Activated CD8-positive, alpha-beta T cell treated with anti-CD3 and anti-CD28 coated beads, Interleukin-2, amount 10 ng/mL, durations not matched to agents 7 days and 5 days (primary cell): ENCODE measurements at regions of chr2 and their contacts with region 1.

Region 1: DNA sequence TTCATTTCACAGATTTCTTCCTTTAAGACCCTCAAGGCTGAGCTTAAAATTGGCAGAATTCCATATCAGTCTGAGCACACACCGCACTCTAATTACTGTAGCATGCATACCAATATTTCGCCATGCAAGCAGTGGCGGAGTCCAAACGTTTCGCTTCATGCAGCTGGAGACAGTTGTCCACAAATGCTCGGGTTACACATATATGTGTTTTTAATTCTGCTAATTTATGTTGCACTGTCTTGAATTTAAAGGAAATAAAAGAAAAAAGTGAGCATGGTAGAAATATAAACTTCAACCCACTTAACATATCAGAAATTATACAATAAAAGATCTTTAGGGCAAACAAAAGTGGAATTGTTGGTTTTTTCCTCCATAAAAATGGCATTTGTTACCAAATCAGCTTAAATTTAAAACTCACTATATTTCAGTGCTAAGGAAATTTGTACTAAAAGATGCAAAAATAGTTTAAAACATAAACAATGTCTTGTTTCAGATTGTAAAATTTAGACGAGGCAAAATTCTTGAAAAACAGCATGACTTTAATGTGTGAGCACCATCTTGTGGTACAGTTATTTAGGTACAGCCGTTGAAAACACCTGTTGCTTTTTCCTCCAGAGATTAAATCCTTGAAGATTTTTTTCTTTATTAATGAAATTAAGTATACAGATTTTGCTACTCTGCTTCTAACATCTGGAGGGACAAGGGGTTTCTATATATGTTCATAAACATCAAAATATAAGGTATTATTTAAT is 24.1 kb upstream of the KANSL1L start:
- DNase-seq: peak; percentile 29
- ATAC-seq: no peak
- H3K4me3 Mint-ChIP-seq: no peak overlapping the region
- H3K27ac Mint-ChIP-seq: no peak overlapping the region
- H3K4me1 Mint-ChIP-seq: peaks cover 4% of the 10 kb centered on the region
- H3K27me3 Mint-ChIP-seq: peaks cover 6% of the 10 kb centered on the region

Region 2: DNA sequence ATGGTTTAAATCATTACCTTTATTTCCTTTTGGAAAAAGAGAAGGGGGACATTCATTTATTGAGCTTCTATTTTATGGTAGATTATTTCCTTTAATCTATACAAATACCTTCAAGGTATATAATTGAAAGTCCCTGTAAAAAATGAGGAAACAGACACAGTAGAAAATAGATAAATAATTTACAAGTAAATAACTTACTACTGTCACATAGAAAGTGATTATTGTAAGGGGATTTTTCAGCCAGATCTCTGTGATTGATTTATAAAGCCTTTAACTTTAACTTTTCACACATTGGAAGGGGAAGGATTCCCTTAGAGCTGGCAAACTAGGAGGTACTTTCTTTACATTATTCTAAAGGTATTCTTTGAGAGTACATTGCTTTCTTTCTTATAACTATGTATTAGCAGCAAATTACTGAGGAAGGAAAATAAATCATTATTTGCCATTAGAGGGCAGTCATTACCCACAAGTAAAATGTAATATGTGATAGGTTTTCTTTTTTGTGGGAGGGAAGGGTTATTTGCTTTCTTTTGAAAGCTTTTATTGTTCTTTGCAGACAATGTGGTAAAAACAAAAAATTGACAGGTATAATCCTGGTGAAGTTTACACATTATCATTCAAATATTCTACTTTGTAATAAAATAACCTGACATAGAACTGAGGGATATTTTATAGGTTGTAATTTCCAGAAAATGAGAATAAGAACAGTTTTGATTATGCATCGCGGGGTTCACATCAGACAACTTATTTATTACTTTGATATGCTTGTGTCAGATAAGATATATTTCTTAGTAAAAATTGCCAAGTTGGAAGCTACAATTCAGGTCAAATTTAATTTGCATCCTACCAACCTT is 217.7 kb before region 1 on chr2:
- CTCF ChIA-PET with region 1: interaction called, 16 read pairs
- POLR2A ChIA-PET with region 1: no interaction called
- DNase-seq: no peak
- ATAC-seq: no peak
- H3K4me3 Mint-ChIP-seq: no peak overlapping the region
- H3K27ac Mint-ChIP-seq: no peak overlapping the region
- H3K4me1 Mint-ChIP-seq: no peaks in the 10 kb centered on the region
- H3K27me3 Mint-ChIP-seq: peaks cover 8% of the 10 kb centered on the region

Region 3: GRCh38 chr2:210072922-210073509 is 122.3 kb before region 1 on chr2:
- CTCF ChIA-PET with region 1: interaction called, 10 read pairs
- POLR2A ChIA-PET with region 1: no interaction called
- DNase-seq: no peak
- ATAC-seq: no peak
- H3K4me3 Mint-ChIP-seq: no peak overlapping the region
- H3K27ac Mint-ChIP-seq: no peak overlapping the region
- H3K4me1 Mint-ChIP-seq: no peaks in the 10 kb centered on the region
- H3K27me3 Mint-ChIP-seq: no peaks in the 10 kb centered on the region